Breast epithelium (tissue), 4 donors: ENCODE measurements at regions of chr1 and their contacts with region 1.

Region 1: GRCh38 chr1:197464044-197464443 is 196.0 kb downstream of the CRB1 start:
- DNase-seq: no peak
- H3K4me3 ChIP-seq: no peak overlapping the region
- H3K27ac ChIP-seq: peak overlapping the region in 1 of 2 donors; percentile 4
- H3K4me1 ChIP-seq: no peaks in the 10 kb centered on the region
- H3K27me3 ChIP-seq: no peaks in the 10 kb centered on the region
- CTCF ChIP-seq: no peak
- POLR2A ChIP-seq: no peak

Region 2: GRCh38 chr1:197096137-197096536 is 367.9 kb before region 1 on chr1:
- intact Hi-C with region 1: loop called (anchors 5 kb)
- DNase-seq: no peak
- H3K4me3 ChIP-seq: no peak overlapping the region
- H3K27ac ChIP-seq: no peak overlapping the region
- H3K4me1 ChIP-seq: no peaks in the 10 kb centered on the region
- H3K27me3 ChIP-seq: no peaks in the 10 kb centered on the region
- CTCF ChIP-seq: no peak
- POLR2A ChIP-seq: no peak

Region 3: DNA sequence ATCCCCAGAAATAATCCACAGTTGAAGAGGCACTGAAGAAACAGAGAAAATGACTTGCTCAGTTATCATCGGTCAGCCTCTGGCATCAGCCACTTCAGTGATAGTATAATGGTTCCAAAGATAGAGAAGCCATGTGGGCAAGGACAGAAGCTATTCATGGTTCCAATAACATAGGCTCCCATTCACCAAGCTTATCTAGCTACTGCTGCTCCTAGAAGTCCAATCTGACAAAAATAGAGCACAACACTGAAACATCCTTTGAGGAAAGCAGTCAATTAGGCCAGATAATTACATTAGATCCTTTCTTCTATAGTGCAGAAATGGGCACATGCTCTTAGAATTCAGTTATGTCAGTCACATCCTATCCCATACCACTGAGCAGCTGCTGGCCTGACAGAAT is 229.5 kb before region 1 on chr1:
- intact Hi-C with region 1: no loop called
- DNase-seq: no peak
- H3K4me3 ChIP-seq: no peak overlapping the region
- H3K27ac ChIP-seq: no peak overlapping the region
- H3K4me1 ChIP-seq: no peaks in the 10 kb centered on the region
- H3K27me3 ChIP-seq: no peaks in the 10 kb centered on the region
- CTCF ChIP-seq: no peak
- POLR2A ChIP-seq: no peak

Region 4: GRCh38 chr1:198167436-198167934 is 703.4 kb after region 1 on chr1:
- intact Hi-C with region 1: no loop called
- DNase-seq: no peak
- H3K4me3 ChIP-seq: no peak overlapping the region
- H3K27ac ChIP-seq: no peak overlapping the region
- H3K4me1 ChIP-seq: peaks cover 0 to 9% of the 10 kb centered on the region in 2 donors
- H3K27me3 ChIP-seq: no peaks in the 10 kb centered on the region
- CTCF ChIP-seq: no peak
- POLR2A ChIP-seq: no peak